CD8-positive, alpha-beta T cell (primary cell): ENCODE measurements at regions of chr3 and their contacts with region 1.

Region 1: GRCh38 chr3:141487521-141488252 is 860 bp downstream of the RASA2 start:
- DNase-seq: peak; percentile 67 to 94 (median 87)
- ATAC-seq: peak; percentile 60
- H3K4me3 ChIP-seq: peak overlapping the region; percentile 59 to 68
- H3K4me3 Mint-ChIP-seq: peak overlapping the region; percentile 93
- H3K27ac ChIP-seq: peak overlapping the region; percentile 73 to 85
- H3K27ac Mint-ChIP-seq: peak overlapping the region; percentile 96
- H3K4me1 ChIP-seq: peaks cover 65% of the 10 kb centered on the region
- H3K4me1 Mint-ChIP-seq: peaks cover 76% of the 10 kb centered on the region
- H3K27me3 ChIP-seq: no peaks in the 10 kb centered on the region
- H3K27me3 Mint-ChIP-seq: no peaks in the 10 kb centered on the region
- CTCF ChIP-seq: no peak

Region 2: DNA sequence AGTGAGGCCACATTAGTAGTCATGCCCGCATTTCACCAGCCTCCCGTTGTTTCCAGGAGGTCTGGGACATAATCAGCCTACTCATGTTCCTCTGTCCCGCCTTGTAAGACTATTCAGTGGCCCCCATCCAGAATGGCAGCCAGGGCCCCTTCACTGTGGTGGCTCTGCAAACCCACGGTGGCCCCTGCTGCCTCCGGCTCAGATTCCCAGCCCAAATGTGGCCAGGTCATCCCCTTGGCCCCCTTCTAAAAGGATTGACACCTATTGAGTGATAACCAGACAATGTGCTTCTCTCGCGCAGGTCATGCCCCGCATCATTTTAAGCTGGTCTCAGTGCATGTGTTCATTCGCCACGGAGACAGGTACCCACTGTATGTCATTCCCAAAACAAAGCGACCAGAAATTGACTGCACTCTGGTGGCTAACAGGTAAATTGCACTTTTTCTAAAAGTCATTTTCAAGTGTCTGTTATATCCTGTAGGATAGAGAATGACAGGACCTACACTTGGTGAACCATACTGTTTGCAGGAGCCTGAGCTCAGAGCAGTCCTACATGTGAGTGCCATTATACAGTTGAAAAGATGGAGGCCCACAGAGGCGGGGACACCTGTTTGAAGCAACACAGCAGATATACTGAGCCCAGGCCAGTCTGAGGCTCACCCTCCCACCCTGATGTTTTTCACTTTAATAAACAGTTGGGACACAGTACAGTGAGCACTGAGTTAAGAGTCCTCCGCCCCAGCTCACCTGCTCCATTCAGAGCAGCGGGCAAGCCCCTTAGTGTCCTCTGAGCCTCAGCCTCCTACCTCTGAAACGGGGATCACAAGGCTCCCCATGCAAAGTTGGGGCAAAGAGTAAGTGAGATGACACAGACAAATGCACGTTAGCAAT is 208.4 kb before region 1 on chr3:
- CTCF ChIA-PET with region 1: no interaction called
- POLR2A ChIA-PET with region 1: no interaction called
- intact Hi-C with region 1: no loop called
- DNase-seq: peak in 3 of 9 experiments; percentile 30 to 65 (median 46)
- ATAC-seq: peak; percentile 89
- H3K4me3 ChIP-seq: no peak overlapping the region
- H3K4me3 Mint-ChIP-seq: no peak overlapping the region
- H3K27ac ChIP-seq: no peak overlapping the region
- H3K27ac Mint-ChIP-seq: peak overlapping the region; percentile 32
- H3K4me1 ChIP-seq: peaks cover 18% of the 10 kb centered on the region
- H3K4me1 Mint-ChIP-seq: peaks cover 23% of the 10 kb centered on the region
- H3K27me3 ChIP-seq: no peaks in the 10 kb centered on the region
- H3K27me3 Mint-ChIP-seq: no peaks in the 10 kb centered on the region
- CTCF ChIP-seq: peak; percentile 59

Region 3: GRCh38 chr3:141370065-141370533 is 117.6 kb before region 1 on chr3:
- CTCF ChIA-PET with region 1: no interaction called
- POLR2A ChIA-PET with region 1: no interaction called
- intact Hi-C with region 1: no loop called
- DNase-seq: peak; percentile 15 to 94 (median 54)
- ATAC-seq: peak; percentile 100
- H3K4me3 ChIP-seq: no peak overlapping the region
- H3K4me3 Mint-ChIP-seq: no peak overlapping the region
- H3K27ac ChIP-seq: no peak overlapping the region
- H3K27ac Mint-ChIP-seq: no peak overlapping the region
- H3K4me1 ChIP-seq: no peaks in the 10 kb centered on the region
- H3K4me1 Mint-ChIP-seq: peaks cover 9% of the 10 kb centered on the region
- H3K27me3 ChIP-seq: no peaks in the 10 kb centered on the region
- H3K27me3 Mint-ChIP-seq: no peaks in the 10 kb centered on the region
- CTCF ChIP-seq: peak; percentile 62

Region 4: GRCh38 chr3:141402476-141403171 is 85.1 kb before region 1 on chr3:
- CTCF ChIA-PET with region 1: no interaction called
- POLR2A ChIA-PET with region 1: no interaction called
- intact Hi-C with region 1: loop called in 1 of 2 experiments (anchors 5 kb)
- DNase-seq: peak; percentile 15 to 80 (median 56)
- ATAC-seq: peak; percentile 67
- H3K4me3 ChIP-seq: peak overlapping the region; percentile 70 to 85
- H3K4me3 Mint-ChIP-seq: peak overlapping the region; percentile 96
- H3K27ac ChIP-seq: peak overlapping the region; percentile 81 to 88
- H3K27ac Mint-ChIP-seq: peak overlapping the region; percentile 97
- H3K4me1 ChIP-seq: peaks cover 25% of the 10 kb centered on the region
- H3K4me1 Mint-ChIP-seq: peaks cover 70% of the 10 kb centered on the region
- H3K27me3 ChIP-seq: no peaks in the 10 kb centered on the region
- H3K27me3 Mint-ChIP-seq: no peaks in the 10 kb centered on the region
- CTCF ChIP-seq: no peak

Region 5: GRCh38 chr3:141477224-141477623 is 10.5 kb before region 1 on chr3:
- CTCF ChIA-PET with region 1: interaction called, 4 read pairs
- POLR2A ChIA-PET with region 1: interaction called, 9 read pairs
- intact Hi-C with region 1: loop called in 1 of 2 experiments (anchors 1 kb)
- DNase-seq: no peak
- ATAC-seq: no peak
- H3K4me3 ChIP-seq: no peak overlapping the region
- H3K4me3 Mint-ChIP-seq: no peak overlapping the region
- H3K27ac ChIP-seq: no peak overlapping the region
- H3K27ac Mint-ChIP-seq: no peak overlapping the region
- H3K4me1 ChIP-seq: peaks cover 34% of the 10 kb centered on the region
- H3K4me1 Mint-ChIP-seq: peaks cover 44% of the 10 kb centered on the region
- H3K27me3 ChIP-seq: no peaks in the 10 kb centered on the region
- H3K27me3 Mint-ChIP-seq: no peaks in the 10 kb centered on the region
- CTCF ChIP-seq: no peak

Region 6: GRCh38 chr3:141498598-141499223 is 11.0 kb after region 1 on chr3:
- CTCF ChIA-PET with region 1: interaction called, 5 read pairs
- POLR2A ChIA-PET with region 1: interaction called, 93 read pairs
- intact Hi-C with region 1: loop called (anchors 1 kb)
- DNase-seq: peak; percentile 66 to 98 (median 86)
- ATAC-seq: peak; percentile 82
- H3K4me3 ChIP-seq: peak overlapping the region; percentile 31 to 44
- H3K4me3 Mint-ChIP-seq: peak overlapping the region; percentile 76
- H3K27ac ChIP-seq: peak overlapping the region; percentile 73 to 96
- H3K27ac Mint-ChIP-seq: peak overlapping the region; percentile 94
- H3K4me1 ChIP-seq: peaks cover 82% of the 10 kb centered on the region
- H3K4me1 Mint-ChIP-seq: peaks cover 68% of the 10 kb centered on the region
- H3K27me3 ChIP-seq: no peaks in the 10 kb centered on the region
- H3K27me3 Mint-ChIP-seq: no peaks in the 10 kb centered on the region
- CTCF ChIP-seq: no peak

Region 7: DNA sequence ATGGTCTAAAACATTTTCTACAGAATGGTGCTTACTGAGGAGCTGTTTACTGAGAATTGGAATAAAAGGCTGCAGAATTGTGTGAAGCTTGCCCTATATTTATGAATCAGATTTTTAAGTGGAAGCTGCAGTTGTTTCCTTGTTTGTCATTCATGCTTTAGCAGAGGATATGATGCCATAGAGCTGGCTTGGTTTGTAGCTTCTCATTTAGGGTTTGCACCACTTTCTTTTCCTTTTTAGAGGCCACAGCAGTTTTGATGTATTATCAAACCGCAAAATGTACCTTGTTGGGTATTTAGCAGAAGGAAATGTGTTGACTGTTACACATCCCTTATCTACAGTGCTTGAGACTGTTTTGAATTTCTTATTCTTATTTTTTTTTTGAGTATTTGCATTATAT is 65.4 kb after region 1 on chr3:
- CTCF ChIA-PET with region 1: interaction called, 4 read pairs
- POLR2A ChIA-PET with region 1: interaction called, 61 read pairs
- intact Hi-C with region 1: loop called in 1 of 2 experiments (anchors 2 kb)
- DNase-seq: peak in 4 of 9 experiments; percentile 21 to 80 (median 48)
- ATAC-seq: peak; percentile 89
- H3K4me3 ChIP-seq: no peak overlapping the region
- H3K4me3 Mint-ChIP-seq: peak overlapping the region; percentile 65
- H3K27ac ChIP-seq: peak overlapping the region; percentile 15 to 45
- H3K27ac Mint-ChIP-seq: peak overlapping the region; percentile 83
- H3K4me1 ChIP-seq: peaks cover 68% of the 10 kb centered on the region
- H3K4me1 Mint-ChIP-seq: peaks cover 64% of the 10 kb centered on the region
- H3K27me3 ChIP-seq: no peaks in the 10 kb centered on the region
- H3K27me3 Mint-ChIP-seq: no peaks in the 10 kb centered on the region
- CTCF ChIP-seq: no peak